WTC11 (cell line): ENCODE measurements at regions of chr17 and their contacts with region 1.

Region 1: DNA sequence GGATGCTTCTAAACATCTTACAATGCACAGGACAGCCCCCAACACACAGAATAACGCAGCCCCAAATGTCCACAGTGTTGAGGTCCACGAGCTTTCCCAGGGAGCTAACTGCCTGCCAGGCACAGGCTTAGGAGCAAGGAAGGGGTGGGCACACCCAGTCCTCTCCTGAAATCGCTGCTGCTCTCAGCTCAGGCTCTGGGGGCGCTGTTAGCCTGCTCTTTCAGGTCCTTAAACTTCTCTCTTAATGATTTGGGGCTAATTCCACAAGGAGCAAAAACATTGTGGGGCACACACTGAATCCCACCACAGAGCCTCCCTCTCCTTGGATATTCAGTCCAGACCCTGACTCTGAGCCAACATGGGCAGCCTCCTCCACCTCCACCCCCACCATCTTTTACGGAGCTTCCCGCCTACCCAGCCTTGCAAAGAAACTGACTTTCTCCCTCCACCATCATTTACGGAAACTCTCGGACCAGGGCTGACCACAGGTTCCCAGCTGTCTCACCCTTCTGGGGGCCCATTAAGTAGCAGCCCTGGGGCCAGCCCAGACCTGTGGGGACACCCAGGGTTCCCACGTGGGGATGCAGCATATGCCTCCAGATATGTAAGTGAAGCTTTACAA is 1.1 kb downstream of the CD300H start:
- DNase-seq: peak; percentile 82
- ATAC-seq: peak; percentile 96
- H3K4me3 Mint-ChIP-seq: no peak overlapping the region
- H3K27ac Mint-ChIP-seq: no peak overlapping the region
- H3K4me1 Mint-ChIP-seq: peaks cover 7% of the 10 kb centered on the region; the same call in 1 of the 2 replicates
- H3K27me3 Mint-ChIP-seq: peaks cover 18% of the 10 kb centered on the region
- CTCF ChIP-seq: peak; percentile 77

Region 2: DNA sequence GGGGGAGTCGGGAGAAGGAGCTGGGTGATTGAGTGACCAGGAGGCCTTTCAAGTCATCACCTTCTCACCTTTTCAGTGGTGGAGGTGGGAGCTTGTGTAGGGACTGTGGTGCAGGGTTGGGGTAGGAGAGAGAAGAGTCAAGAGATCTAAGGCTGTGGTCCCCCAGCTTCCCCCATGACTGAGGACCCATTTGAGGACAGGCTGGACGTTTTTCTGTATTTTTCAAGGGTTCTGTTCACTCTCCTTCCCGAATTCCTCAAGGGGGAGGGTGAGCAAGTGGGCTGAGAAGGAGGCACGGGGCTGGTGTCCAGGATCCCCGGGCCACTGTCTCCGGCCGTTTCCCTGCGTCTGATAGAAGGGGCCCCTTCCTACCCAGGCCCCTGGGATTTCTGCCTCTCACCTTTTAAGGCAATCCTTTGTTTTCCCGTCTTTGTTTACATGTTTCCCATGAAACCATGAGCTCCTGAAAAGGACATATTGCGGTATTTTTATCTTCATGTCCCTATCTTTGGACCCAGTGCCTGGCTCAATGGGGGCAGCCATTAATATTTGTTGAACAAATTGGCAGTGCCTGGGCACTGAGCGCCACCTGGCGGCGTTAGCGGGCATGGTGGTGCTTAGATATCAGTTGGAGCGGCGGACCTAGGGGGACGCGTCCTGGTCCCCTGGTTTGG is 109.0 kb before region 1 on chr17:
- CTCF ChIA-PET with region 1: interaction called, 19 read pairs
- POLR2A ChIA-PET with region 1: no interaction called
- DNase-seq: peak; percentile 86
- ATAC-seq: peak; percentile 13
- H3K4me3 Mint-ChIP-seq: no peak overlapping the region
- H3K27ac Mint-ChIP-seq: no peak overlapping the region
- H3K4me1 Mint-ChIP-seq: peaks cover 36% of the 10 kb centered on the region
- H3K27me3 Mint-ChIP-seq: peaks cover 21% of the 10 kb centered on the region
- CTCF ChIP-seq: peak; percentile 89

Region 3: GRCh38 chr17:74485022-74485743 is 81.1 kb before region 1 on chr17:
- CTCF ChIA-PET with region 1: no interaction called
- POLR2A ChIA-PET with region 1: no interaction called
- DNase-seq: no peak
- ATAC-seq: no peak
- H3K4me3 Mint-ChIP-seq: no peak overlapping the region
- H3K27ac Mint-ChIP-seq: no peak overlapping the region
- H3K4me1 Mint-ChIP-seq: no peaks in the 10 kb centered on the region
- H3K27me3 Mint-ChIP-seq: peaks cover 13% of the 10 kb centered on the region
- CTCF ChIP-seq: no peak

Region 4: DNA sequence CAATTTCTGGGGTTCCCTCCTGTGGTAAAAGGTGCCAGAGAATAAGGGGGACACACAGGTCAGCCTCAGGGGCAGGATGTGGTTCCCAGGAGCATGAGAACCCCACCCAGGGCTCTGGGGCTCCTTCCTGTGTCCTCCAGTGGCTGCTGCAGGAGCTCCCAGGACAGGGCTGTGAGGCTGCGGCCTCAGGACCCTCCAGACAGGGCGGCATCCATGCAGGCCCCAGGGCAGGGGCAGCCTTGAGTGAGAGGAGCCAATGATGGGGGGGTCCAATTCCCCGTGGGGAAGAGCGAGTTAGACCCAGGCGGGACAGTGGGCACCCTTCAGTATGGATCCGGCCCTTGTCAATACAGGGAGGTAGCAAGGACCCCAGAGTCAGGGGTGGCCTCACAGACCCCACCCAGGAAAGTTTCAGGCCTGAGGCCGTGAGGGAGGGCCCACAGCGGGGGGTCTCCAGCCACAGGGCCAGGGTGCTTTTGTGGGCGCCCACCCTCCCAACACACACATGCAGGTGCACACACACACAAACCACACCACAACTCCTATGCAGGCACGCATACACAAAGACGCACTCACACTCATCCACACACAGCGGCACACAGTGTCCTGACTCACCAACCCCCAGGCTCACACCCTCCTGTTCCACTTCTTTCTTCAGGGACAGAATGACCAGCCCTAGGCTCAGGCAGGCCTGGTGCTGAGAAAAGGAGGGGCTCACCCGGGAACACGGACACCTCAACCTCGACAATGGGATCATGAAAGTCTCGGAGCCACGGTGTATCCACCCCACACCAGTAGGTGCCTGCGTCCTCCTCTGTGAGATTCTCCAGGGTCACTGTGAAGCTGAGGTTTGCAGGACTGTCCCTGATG is 22.1 kb before region 1 on chr17:
- CTCF ChIA-PET with region 1: interaction called, 13 read pairs
- POLR2A ChIA-PET with region 1: no interaction called
- DNase-seq: no peak
- ATAC-seq: no peak
- H3K4me3 Mint-ChIP-seq: no peak overlapping the region
- H3K27ac Mint-ChIP-seq: no peak overlapping the region
- H3K4me1 Mint-ChIP-seq: no peaks in the 10 kb centered on the region
- H3K27me3 Mint-ChIP-seq: peaks cover 5% of the 10 kb centered on the region
- CTCF ChIP-seq: no peak

Region 5: DNA sequence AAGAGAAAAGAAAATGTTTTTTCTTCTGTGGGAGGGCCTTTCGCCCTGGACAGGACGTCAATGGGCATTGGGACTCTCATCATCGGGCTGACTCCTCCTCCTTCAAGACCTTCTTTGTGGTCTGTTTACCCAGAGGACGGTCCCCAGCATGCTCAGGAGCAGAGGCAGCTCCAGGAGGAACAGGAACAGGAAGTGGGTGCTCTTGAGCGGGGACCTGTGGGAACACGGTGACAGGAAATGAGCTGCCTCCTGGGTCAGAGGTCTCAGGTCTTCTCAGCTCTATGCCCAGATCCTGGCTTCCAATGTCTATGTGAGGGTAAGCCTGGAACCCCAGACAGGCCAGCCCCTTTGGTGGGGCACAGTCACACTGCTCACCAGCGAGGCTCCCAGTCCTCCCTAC is 13.7 kb after region 1 on chr17:
- CTCF ChIA-PET with region 1: interaction called, 15 read pairs
- POLR2A ChIA-PET with region 1: no interaction called
- DNase-seq: no peak
- ATAC-seq: no peak
- H3K4me3 Mint-ChIP-seq: no peak overlapping the region
- H3K27ac Mint-ChIP-seq: no peak overlapping the region
- H3K4me1 Mint-ChIP-seq: peaks cover 6% of the 10 kb centered on the region
- H3K27me3 Mint-ChIP-seq: peaks cover 10% of the 10 kb centered on the region
- CTCF ChIP-seq: no peak

Region 6: DNA sequence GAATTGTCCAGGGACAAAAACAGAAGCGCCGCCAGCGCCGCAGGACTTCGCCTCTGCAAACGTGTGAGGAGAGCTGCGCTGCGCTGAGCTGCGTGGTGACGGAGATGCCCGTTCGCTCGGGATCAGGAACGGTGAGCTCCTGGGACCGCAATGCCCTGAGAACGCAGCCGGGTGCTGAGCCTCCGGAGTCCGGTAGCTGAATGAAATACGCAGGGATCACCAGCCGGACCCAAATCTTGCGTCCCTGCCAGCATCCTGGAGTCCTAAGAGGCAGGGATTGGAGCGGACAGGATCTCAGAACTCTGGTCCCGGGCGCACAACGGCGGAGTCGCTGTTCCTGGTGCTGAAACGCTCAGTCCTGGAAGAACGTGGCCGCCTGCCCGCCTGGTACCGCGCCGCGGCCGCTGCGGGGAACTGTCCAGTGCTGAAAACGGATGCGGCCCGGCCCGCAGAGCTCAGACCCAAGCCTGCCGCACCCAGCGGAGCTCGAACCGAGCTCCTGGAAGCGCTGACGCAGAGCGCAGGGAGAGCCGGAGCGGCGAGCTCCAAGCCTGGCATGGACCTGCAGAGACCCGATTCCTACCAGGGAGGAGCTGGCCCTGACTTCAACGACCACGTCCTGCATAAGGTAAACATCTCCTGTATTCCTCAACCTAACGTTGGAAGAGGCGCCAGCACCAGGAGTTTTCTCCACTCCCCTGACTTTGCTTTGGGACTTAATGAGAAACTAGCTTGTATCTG is 105.0 kb after region 1 on chr17:
- CTCF ChIA-PET with region 1: interaction called, 14 read pairs
- POLR2A ChIA-PET with region 1: no interaction called
- DNase-seq: peak; percentile 97
- ATAC-seq: peak; percentile 95
- H3K4me3 Mint-ChIP-seq: peak overlapping the region; percentile 28
- H3K27ac Mint-ChIP-seq: no peak overlapping the region
- H3K4me1 Mint-ChIP-seq: peaks cover 5% of the 10 kb centered on the region
- H3K27me3 Mint-ChIP-seq: peaks cover 76% of the 10 kb centered on the region
- CTCF ChIP-seq: no peak